HCT116 (cell line): ENCODE measurements at regions of chr3 and their contacts with region 1.

Region 1: GRCh38 chr3:77976079-77976478 is 936.2 kb downstream of the ROBO2 start:
- DNase-seq: no peak
- ATAC-seq: no peak
- H3K4me3 ChIP-seq: no peak overlapping the region
- H3K27ac ChIP-seq: no peak overlapping the region
- H3K4me1 ChIP-seq: no peaks in the 10 kb centered on the region
- H3K27me3 ChIP-seq: no peaks in the 10 kb centered on the region
- CTCF ChIP-seq: no peak
- POLR2A ChIP-seq: no peak
- RAD21 ChIP-seq: no peak

Region 2: DNA sequence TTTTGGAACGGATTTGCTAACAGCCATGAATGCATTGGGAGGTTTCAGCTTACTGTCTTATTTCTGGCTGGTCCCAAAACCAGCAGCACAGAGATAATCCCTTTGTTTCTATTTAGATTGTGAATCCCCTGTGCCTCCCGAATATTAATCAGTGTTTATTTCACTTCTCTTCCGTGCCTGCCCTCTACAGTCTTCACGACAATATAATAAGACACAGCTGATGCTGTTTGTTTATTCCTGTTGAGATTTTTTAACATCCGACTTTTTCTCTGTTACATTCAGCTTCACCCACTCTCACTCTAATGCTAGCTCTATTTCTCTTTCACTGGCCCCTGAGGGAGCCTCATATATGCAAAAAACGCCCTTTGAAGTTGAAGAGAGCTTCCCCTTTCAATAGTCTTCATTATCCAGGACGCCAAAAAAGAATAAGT is 59.1 kb after region 1 on chr3:
- CTCF ChIA-PET with region 1: no interaction called
- POLR2A ChIA-PET with region 1: no interaction called
- RAD21 ChIA-PET with region 1: no interaction called
- intact Hi-C with region 1: loop called (anchors 10 kb)
- DNase-seq: no peak
- ATAC-seq: no peak
- H3K4me3 ChIP-seq: no peak overlapping the region
- H3K27ac ChIP-seq: no peak overlapping the region
- H3K4me1 ChIP-seq: no peaks in the 10 kb centered on the region
- H3K27me3 ChIP-seq: no peaks in the 10 kb centered on the region
- CTCF ChIP-seq: no peak
- POLR2A ChIP-seq: no peak
- RAD21 ChIP-seq: no peak